Pancreas (tissue), 10 donors: ENCODE measurements at regions of chr22 and their contacts with region 1.

Region 1: DNA sequence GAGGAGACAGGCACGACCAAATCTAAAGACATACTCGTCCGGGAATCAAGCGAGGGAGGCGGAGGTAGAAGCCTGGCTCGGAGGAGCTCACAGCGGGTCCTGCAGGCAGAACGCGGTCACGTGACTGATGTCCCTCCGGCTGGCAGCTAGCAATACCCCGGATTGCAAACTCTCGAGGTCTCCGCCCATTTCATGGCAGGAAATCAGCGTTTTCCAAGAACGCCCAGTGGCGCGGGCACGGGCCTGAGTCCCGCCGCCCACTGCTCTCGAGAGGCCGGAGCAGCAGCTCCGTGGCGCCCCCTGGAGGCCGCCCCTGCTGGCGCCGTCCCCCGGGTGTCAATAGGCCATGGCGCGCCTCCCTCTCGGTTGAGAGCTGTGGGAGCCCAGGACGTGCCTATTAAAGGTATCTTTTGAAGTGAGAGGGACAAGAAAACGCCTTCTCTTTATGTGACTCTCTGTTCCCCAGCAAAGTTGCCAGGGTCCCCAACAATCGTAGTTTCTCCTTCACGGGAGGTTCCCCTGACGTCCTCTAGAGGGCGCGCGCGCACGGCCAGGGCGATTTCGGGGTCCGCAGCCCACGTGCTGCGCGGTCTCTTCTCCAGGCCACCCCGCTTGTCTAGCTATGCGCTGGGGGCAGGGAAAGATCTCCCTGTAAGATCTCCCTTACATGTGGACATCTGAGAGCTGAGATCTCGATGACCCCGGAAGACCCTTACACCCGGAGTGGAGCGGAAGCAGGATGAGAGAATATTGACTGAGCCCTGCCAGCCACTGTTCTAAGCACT is 37.3 kb upstream of the RBFOX2 start:
- DNase-seq: peak; percentile 90 to 98 (median 95)
- ATAC-seq: peak; percentile 88 to 95 (median 90)
- H3K4me3 ChIP-seq: peak overlapping the region; percentile 14 to 54 (median 38)
- H3K27ac ChIP-seq: peak overlapping the region; percentile 62 to 86 (median 76)
- H3K4me1 ChIP-seq: peaks cover 0 to 7% (median 0%) of the 10 kb centered on the region in 3 donors
- H3K27me3 ChIP-seq: no peaks in the 10 kb centered on the region
- CTCF ChIP-seq: peak; percentile 100

Region 2: GRCh38 chr22:35930933-35931332 is 135.0 kb before region 1 on chr22:
- intact Hi-C with region 1: loop called in 1 of 3 experiments (anchors 5 kb)
- DNase-seq: peak in 2 of 6 donors; percentile 26 to 27
- ATAC-seq: peak; percentile 92 to 100 (median 98)
- H3K4me3 ChIP-seq: no peak overlapping the region
- H3K27ac ChIP-seq: no peak overlapping the region
- H3K4me1 ChIP-seq: no peaks in the 10 kb centered on the region
- H3K27me3 ChIP-seq: no peaks in the 10 kb centered on the region
- CTCF ChIP-seq: peak in 3 of 4 donors; percentile 15 to 52 (median 41)

Region 3: DNA sequence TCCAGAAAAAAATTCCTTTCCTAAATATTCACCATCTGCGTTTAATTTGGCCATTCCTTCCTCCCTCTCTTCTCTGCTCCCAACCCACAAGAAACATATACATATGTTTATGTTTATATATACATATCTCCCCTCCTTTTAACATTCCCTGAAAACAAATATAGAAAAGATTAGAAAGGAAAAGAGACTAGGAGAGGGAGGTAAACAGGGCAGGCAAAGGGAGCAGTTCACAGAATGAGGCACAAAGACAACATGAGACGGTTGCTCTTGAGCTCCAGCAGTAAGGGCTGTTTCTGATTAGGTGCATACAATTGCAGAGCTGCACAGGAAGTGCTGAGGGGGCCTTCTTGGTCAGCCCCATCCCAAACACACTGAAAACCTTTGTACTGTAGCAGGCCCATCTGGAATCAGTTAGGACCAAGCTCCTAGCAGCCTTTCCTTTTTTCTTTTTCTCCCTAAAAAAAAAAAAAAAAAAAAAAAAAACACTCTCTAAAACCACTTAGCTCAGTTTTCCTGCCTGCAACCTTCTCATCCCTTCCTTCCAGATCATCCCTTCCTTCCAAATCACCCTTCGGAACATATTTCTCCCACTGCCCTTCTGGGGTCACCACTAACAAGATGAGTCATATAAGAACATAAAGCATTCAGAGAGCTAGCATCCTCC is 94.4 kb before region 1 on chr22:
- intact Hi-C with region 1: no loop called
- DNase-seq: no peak
- ATAC-seq: peak in 2 of 4 donors; percentile 7 to 10
- H3K4me3 ChIP-seq: no peak overlapping the region
- H3K27ac ChIP-seq: peak overlapping the region in 2 of 4 donors; percentile 90 to 92
- H3K4me1 ChIP-seq: peaks cover 27 to 63% (median 28%) of the 10 kb centered on the region in 3 donors
- H3K27me3 ChIP-seq: no peaks in the 10 kb centered on the region
- CTCF ChIP-seq: no peak

Region 4: DNA sequence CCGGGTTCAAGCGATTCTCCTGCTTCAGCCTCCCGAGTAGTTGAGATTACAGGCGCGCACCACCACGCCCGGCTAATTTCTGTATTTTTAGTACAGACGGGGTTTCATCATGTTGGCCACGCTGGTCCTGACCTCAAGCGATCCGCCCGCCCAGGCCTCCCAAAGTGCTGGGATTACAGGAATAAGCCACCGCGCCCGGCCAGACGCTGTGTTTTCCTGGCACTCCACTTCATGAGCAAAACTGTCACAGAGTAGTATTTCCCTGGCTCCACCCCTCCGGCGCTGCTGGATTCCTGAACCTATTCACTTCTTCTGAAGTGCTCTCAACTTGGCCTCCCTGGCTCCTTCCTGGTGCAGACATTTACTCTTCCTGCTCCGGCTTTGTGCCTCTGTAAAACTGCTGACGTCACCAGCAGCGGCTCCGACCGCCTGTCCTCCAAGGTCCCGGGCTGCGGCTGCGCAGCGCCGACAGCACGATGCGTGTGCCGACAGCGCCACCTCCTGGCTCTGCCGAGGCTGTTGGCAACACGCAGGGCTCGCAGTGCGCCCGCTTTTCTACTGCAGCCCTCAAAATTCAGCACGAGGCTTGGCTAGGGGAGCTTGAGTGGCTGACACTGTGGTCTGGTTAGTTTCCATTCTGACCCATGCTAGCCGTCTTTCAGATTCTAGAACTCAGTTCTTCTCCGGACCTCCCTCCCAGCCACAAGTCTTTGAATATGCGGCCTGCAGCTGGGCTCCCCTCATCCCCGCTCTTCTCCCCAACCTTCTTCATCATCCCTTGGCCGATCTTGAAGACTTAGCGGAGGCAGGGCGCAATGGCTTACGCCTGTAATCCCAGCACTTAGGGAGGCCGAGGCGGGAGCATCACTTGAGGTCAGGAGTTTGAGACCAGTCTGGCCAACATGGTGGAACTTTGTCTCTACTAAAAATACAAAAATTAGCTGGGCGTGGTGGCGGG is 58.0 kb after region 1 on chr22:
- intact Hi-C with region 1: loop called in 1 of 3 experiments (anchors 5 kb)
- DNase-seq: peak; percentile 95 to 98 (median 96)
- ATAC-seq: peak; percentile 98 to 99 (median 99)
- H3K4me3 ChIP-seq: peak overlapping the region in 2 of 4 donors; percentile 8 to 21
- H3K27ac ChIP-seq: peak overlapping the region; percentile 73 to 90 (median 79)
- H3K4me1 ChIP-seq: peaks cover 0 to 2% (median 0%) of the 10 kb centered on the region in 3 donors
- H3K27me3 ChIP-seq: no peaks in the 10 kb centered on the region
- CTCF ChIP-seq: peak; percentile 92 to 98 (median 95)